CD8-positive, alpha-beta memory T cell (primary cell): ENCODE measurements at regions of chr6 and their contacts with region 1.

Region 1: DNA sequence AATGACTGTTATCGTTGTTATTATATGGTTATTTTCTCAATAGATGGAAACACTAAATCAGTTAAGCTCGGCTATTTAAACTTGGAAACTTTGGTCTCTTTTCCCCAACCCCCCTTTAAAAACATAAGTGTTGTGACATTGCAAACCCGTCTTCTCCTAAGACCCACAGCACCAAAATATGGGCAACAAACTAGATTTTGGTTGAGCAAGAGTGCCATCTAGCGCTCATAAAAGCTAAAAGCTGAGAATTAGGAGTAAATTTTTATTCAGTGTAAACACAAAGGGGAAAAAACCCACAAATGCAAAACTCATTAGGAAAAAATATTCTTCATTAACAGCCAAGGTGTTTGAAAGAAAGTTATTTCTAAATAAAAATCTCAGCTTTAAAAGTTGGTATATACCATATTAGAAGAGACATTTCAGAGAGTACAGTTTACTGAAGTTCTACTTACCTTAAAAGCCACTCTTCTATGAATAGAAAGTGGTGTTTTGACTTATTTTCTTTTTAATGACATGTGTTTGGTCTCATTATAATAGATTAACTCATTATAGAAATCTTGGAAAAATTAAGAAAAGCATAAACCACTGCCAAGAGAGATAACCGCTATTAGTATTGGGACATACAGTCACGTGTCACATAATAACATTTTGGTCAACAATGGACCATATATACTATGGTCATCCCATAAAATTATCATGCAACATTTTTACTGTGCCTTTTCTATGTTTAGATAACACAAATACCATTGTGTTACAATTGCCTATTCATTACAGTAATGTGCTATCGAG is 21.1 kb downstream of the SESN1 start:
- DNase-seq: peak; percentile 12 to 68 (median 62)
- H3K4me3 ChIP-seq: peak overlapping the region; percentile 14
- H3K4me3 Mint-ChIP-seq: peak overlapping the region; percentile 28 to 62 (median 39)
- H3K27ac ChIP-seq: no peak overlapping the region
- H3K27ac Mint-ChIP-seq: peak overlapping the region in 7 of 8 donors; percentile 3 to 77 (median 37)
- H3K4me1 ChIP-seq: peaks cover 26% of the 10 kb centered on the region
- H3K4me1 Mint-ChIP-seq: peaks cover 52 to 62% (median 57%) of the 10 kb centered on the region in 3 donors
- H3K27me3 ChIP-seq: no peaks in the 10 kb centered on the region
- H3K27me3 Mint-ChIP-seq: no peaks in the 10 kb centered on the region

Region 2: DNA sequence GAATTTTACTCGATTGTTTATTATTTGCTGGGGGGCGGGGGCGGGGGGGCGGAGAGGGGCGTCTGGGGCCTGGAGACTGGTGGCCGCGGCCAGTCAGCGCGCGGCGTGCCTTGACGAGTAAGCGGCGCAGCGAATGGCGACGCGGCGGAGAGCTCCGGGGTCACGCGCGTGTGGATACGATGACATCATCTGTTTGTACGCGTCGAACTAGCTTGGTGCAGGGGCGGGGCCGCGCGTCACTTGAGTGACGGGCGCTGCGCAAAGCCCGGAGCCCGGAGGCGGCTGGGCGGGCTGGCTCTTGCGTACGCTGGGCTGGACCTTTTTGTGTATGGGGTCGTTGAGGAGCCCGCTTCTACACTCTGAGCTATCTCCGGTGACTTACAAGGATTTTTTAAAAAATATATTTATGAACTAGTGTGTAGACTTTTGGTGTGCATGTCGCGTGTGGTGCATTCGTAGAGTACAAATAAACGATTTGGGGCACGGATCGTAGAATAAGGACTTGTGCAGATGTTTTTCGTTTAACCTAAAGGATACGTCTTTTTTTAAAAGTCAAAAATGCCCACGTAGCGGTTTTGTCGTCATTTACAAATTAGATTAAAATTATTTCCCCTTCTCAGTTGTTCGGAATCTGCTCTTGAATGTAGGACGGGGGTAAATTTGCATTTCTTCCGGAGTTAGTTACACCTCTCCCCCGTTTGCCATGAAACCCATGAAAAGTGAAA is 515.0 kb before region 1 on chr6:
- CTCF ChIA-PET with region 1: interaction called, 17 read pairs
- POLR2A ChIA-PET with region 1: interaction called, 4 read pairs
- DNase-seq: peak; percentile 95 to 99 (median 97)
- H3K4me3 ChIP-seq: peak overlapping the region; percentile 80
- H3K4me3 Mint-ChIP-seq: peak overlapping the region; percentile 96 to 100 (median 98)
- H3K27ac ChIP-seq: peak overlapping the region; percentile 99
- H3K27ac Mint-ChIP-seq: peak overlapping the region; percentile 98 to 100 (median 99)
- H3K4me1 ChIP-seq: peaks cover 26% of the 10 kb centered on the region
- H3K4me1 Mint-ChIP-seq: peaks cover 21 to 27% (median 21%) of the 10 kb centered on the region in 3 donors
- H3K27me3 ChIP-seq: no peaks in the 10 kb centered on the region
- H3K27me3 Mint-ChIP-seq: peaks cover 2 to 8% of the 10 kb centered on the region in 2 donors

Region 3: GRCh38 chr6:108896111-108896661 is 177.4 kb before region 1 on chr6:
- CTCF ChIA-PET with region 1: interaction called, 37 read pairs
- POLR2A ChIA-PET with region 1: no interaction called
- DNase-seq: peak in 1 of 5 donors; percentile 71
- H3K4me3 ChIP-seq: peak overlapping the region; percentile 20
- H3K4me3 Mint-ChIP-seq: peak overlapping the region; percentile 25 to 88 (median 83)
- H3K27ac ChIP-seq: peak overlapping the region; percentile 33
- H3K27ac Mint-ChIP-seq: peak overlapping the region; percentile 74 to 99 (median 93)
- H3K4me1 ChIP-seq: peaks cover 41% of the 10 kb centered on the region
- H3K4me1 Mint-ChIP-seq: peaks cover 45 to 71% (median 68%) of the 10 kb centered on the region in 3 donors
- H3K27me3 ChIP-seq: no peaks in the 10 kb centered on the region
- H3K27me3 Mint-ChIP-seq: no peaks in the 10 kb centered on the region

Region 4: GRCh38 chr6:109009236-109009961 is 64.1 kb before region 1 on chr6:
- CTCF ChIA-PET with region 1: interaction called, 25 read pairs
- POLR2A ChIA-PET with region 1: interaction called, 22 read pairs
- DNase-seq: peak; percentile 89 to 94 (median 91)
- H3K4me3 ChIP-seq: peak overlapping the region; percentile 91
- H3K4me3 Mint-ChIP-seq: peak overlapping the region; percentile 97 to 99 (median 99)
- H3K27ac ChIP-seq: peak overlapping the region; percentile 96
- H3K27ac Mint-ChIP-seq: peak overlapping the region; percentile 96 to 100 (median 100)
- H3K4me1 ChIP-seq: peaks cover 47% of the 10 kb centered on the region
- H3K4me1 Mint-ChIP-seq: peaks cover 57 to 76% (median 73%) of the 10 kb centered on the region in 3 donors
- H3K27me3 ChIP-seq: no peaks in the 10 kb centered on the region
- H3K27me3 Mint-ChIP-seq: peaks cover 0 to 2% of the 10 kb centered on the region in 2 donors

Region 5: DNA sequence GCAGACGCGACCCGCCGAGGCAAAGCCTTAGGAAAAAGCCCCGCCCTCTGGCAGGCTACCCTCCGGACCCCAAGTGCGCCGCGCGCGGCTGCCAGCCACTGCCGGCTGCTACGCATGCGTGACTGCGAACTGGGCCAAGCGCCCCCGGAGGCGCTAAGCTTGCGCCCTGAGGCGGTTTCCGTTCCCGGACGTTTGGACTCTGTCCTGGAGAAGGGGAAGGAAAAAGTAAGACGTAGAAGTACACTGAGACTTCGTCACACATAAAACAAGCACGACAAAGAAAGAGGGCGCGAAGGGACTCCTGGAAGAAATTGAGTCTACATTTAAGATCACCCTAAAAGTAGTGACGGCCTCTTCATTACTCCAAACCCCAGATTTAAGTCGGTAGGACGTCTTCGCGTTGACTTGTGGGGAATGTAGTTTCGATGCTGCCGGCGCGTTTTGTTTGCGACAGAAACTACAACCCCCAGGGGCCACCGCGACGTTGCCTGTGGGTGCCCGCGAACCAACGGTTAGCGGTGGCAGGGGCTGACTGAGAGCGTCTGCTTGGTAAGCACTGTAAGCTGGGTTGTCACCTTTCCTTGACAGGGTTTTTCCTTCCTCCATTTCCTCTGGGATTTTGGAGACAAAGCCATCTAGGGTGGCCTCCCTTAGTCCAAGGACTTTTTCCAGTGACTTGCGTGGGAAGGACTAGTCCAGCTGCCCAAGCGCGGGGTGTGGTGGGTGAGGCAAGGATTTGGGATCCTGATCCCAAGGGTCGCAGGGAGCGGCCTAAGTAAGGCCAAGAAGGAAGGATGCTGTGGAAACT is 21.7 kb after region 1 on chr6 and contains the start of gene CEP57L1:
- CTCF ChIA-PET with region 1: interaction called, 21 read pairs
- POLR2A ChIA-PET with region 1: interaction called, 8 read pairs
- DNase-seq: peak; percentile 88 to 96 (median 94)
- H3K4me3 ChIP-seq: peak within 1 kb of the TSS; percentile 95
- H3K4me3 Mint-ChIP-seq: peak within 1 kb of the TSS; percentile 92 to 96 (median 93)
- H3K27ac ChIP-seq: peak within 1 kb of the TSS; percentile 98
- H3K27ac Mint-ChIP-seq: peak within 1 kb of the TSS; percentile 98 to 99 (median 99)
- H3K4me1 ChIP-seq: peaks cover 33% of the 10 kb centered on the region
- H3K4me1 Mint-ChIP-seq: peaks cover 49 to 58% (median 54%) of the 10 kb centered on the region in 3 donors
- H3K27me3 ChIP-seq: no peaks in the 10 kb centered on the region
- H3K27me3 Mint-ChIP-seq: no peaks in the 10 kb centered on the region
- total RNA-seq, gene CEP57L1: 18.6 to 19.1 TPM